Activated naive CD4-positive, alpha-beta T cell treated with anti-CD3 and anti-CD28 coated beads, Interleukin-2, amount 10 ng/mL, durations not matched to agents 7 days and 5 days (primary cell): ENCODE measurements at regions of chr3 and their contacts with region 1.

Region 1: GRCh38 chr3:184811999-184812661 is at the start of gene VPS8:
- DNase-seq: peak; percentile 97
- H3K4me3 Mint-ChIP-seq: peak within 1 kb of the TSS; percentile 91
- H3K27ac Mint-ChIP-seq: peak within 1 kb of the TSS; percentile 94
- H3K4me1 Mint-ChIP-seq: peaks cover 60% of the 10 kb centered on the region
- H3K27me3 Mint-ChIP-seq: peaks cover 9% of the 10 kb centered on the region

Region 2: GRCh38 chr3:184620475-184621119 is 191.5 kb before region 1 on chr3:
- CTCF ChIA-PET with region 1: no interaction called
- DNase-seq: no peak
- H3K4me3 Mint-ChIP-seq: no peak overlapping the region
- H3K27ac Mint-ChIP-seq: no peak overlapping the region
- H3K4me1 Mint-ChIP-seq: peaks cover 8% of the 10 kb centered on the region
- H3K27me3 Mint-ChIP-seq: peaks cover 44% of the 10 kb centered on the region

Region 3: DNA sequence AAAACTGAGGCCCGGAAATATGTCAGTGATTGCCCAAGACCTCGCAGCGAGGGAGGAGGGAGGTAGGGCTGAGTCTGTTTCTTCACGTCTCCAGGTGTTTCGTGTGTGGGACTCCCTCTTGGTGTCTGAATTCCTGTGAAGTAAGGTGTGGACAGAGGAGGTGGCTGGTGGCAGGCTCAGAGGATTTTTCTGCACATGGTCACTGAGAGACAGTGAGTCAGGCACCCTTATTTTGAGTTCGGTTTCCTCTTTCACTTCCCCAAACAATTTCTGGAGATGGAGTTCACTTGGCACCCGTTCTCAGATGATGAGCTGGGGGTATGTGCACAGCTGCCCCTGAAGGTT is 46.4 kb before region 1 on chr3:
- CTCF ChIA-PET with region 1: no interaction called
- DNase-seq: no peak
- H3K4me3 Mint-ChIP-seq: no peak overlapping the region
- H3K27ac Mint-ChIP-seq: no peak overlapping the region
- H3K4me1 Mint-ChIP-seq: peaks cover 7% of the 10 kb centered on the region
- H3K27me3 Mint-ChIP-seq: peaks cover 44% of the 10 kb centered on the region

Region 4: GRCh38 chr3:184777336-184778004 is 34.7 kb before region 1 on chr3:
- CTCF ChIA-PET with region 1: interaction called, 14 read pairs
- DNase-seq: peak; percentile 92
- H3K4me3 Mint-ChIP-seq: no peak overlapping the region
- H3K27ac Mint-ChIP-seq: no peak overlapping the region
- H3K4me1 Mint-ChIP-seq: no peaks in the 10 kb centered on the region
- H3K27me3 Mint-ChIP-seq: peaks cover 48% of the 10 kb centered on the region

Region 5: GRCh38 chr3:184786280-184786941 is 25.7 kb before region 1 on chr3:
- CTCF ChIA-PET with region 1: interaction called, 13 read pairs
- DNase-seq: peak; percentile 54
- H3K4me3 Mint-ChIP-seq: no peak overlapping the region
- H3K27ac Mint-ChIP-seq: no peak overlapping the region
- H3K4me1 Mint-ChIP-seq: peaks cover 29% of the 10 kb centered on the region
- H3K27me3 Mint-ChIP-seq: peaks cover 17% of the 10 kb centered on the region

Region 6: DNA sequence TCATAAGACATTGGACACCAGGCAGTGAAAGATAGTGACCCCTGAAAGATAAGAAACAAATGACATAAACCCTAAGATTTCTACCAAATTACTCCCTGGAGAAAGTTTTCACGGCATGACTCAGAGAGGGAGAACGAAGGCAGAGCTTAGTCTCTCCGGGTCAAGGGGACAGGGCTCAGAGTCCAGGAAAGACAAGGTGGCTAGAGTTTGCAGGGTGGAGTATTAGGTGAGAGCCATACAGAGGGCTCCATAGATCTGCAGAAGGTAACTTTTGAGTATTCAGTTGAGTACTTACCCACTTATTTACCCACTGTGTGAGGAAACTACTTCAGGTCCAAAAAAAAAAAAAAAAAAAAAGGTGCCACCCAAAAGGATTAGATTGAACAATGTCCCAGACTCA is 197.5 kb after region 1 on chr3:
- CTCF ChIA-PET with region 1: no interaction called
- DNase-seq: no peak
- H3K4me3 Mint-ChIP-seq: no peak overlapping the region
- H3K27ac Mint-ChIP-seq: no peak overlapping the region
- H3K4me1 Mint-ChIP-seq: no peaks in the 10 kb centered on the region
- H3K27me3 Mint-ChIP-seq: no peaks in the 10 kb centered on the region